ENCODE measurements at regions of chr7 and their contacts with region 1.

Region 1: GRCh38 chr7:131654668-131655326 is 98.4 kb upstream of the PODXL start:
- DNase-seq: no peak
- H3K4me3 ChIP-seq: no peak overlapping the region
- H3K27me3 ChIP-seq: no peaks in the 10 kb centered on the region
- CTCF ChIP-seq: peak; percentile 97

Region 2: GRCh38 chr7:131501422-131501821 is 153.4 kb before region 1 on chr7:
- CTCF ChIA-PET with region 1: interaction called, 92 read pairs
- POLR2A ChIA-PET with region 1: no interaction called
- DNase-seq: no peak
- H3K4me3 ChIP-seq: no peak overlapping the region
- H3K27me3 ChIP-seq: no peaks in the 10 kb centered on the region
- CTCF ChIP-seq: no peak

Region 3: GRCh38 chr7:131507592-131508331 is 147.0 kb before region 1 on chr7:
- CTCF ChIA-PET with region 1: interaction called, 92 read pairs
- POLR2A ChIA-PET with region 1: no interaction called
- DNase-seq: no peak
- H3K4me3 ChIP-seq: no peak overlapping the region
- H3K27me3 ChIP-seq: no peaks in the 10 kb centered on the region
- CTCF ChIP-seq: peak; percentile 97

Region 4: DNA sequence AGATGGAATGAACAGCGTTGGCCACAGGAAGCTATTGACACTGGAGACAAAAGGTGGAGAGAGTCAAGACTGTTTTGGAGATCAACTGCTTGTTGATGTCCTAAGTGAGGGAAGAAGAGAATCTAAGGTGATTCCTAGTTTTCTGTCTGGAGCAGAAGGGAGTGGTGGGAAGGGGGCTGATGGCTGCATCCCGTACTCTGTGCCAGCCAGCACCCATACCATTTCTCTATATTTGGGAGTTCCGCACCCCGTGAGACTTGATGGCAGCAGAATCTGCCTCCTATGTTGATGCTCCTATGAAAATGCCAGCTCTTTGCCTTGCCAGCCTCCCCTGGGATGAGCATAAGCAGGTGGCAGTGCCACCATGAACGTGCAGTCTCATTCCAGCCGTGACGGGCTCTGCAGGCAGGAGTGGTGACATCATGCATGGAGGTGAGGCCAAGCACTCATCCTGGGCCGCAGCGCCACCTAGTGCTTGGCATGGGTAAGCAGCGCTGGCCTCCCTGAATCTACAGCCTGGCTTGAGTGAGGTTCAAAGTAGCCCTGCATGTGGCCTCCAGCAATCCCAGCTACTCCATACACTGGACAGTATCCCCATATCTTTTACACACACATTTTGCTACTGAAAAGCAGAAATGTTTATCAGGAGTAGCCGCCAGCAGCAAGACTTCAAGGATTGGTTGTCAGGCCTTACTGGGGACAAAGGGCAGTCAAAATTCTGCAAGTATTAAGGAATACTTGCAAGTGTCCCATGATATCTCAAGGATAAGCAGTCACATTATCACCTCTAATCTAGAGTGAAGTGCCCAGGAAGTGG is 141.3 kb before region 1 on chr7:
- CTCF ChIA-PET with region 1: interaction called, 92 read pairs
- POLR2A ChIA-PET with region 1: no interaction called
- DNase-seq: no peak
- H3K4me3 ChIP-seq: no peak overlapping the region
- H3K27me3 ChIP-seq: no peaks in the 10 kb centered on the region
- CTCF ChIP-seq: peak; percentile 99

Region 5: GRCh38 chr7:131642429-131642828 is 12.4 kb before region 1 on chr7:
- CTCF ChIA-PET with region 1: interaction called, 12 read pairs
- POLR2A ChIA-PET with region 1: no interaction called
- DNase-seq: no peak
- H3K4me3 ChIP-seq: no peak overlapping the region
- H3K27me3 ChIP-seq: no peaks in the 10 kb centered on the region
- CTCF ChIP-seq: no peak

Region 6: DNA sequence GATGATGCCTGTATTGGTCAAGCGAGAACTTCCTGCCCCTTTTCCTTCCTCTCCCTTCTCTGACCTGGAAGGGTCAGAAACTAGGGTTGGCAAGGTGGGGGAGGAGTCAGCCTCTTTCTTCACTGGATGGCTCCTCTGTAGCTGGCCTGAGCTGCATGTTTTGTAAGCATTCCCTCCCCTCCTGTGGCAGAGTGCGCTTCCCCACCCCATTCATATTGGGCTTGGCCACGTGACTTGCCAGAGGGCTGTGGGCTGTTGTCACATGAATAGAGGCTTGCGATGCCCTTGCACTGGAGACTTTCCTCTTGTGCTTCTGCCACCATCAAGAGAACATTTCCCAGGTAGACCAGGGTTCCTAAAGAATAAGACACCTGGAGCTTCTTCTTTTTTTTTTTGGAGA is 12.9 kb after region 1 on chr7:
- CTCF ChIA-PET with region 1: interaction called, 15 read pairs
- POLR2A ChIA-PET with region 1: no interaction called
- DNase-seq: no peak
- H3K4me3 ChIP-seq: no peak overlapping the region
- H3K27me3 ChIP-seq: peaks cover under 1% of the 10 kb centered on the region; the same call in 1 of the 2 replicates
- CTCF ChIP-seq: no peak

Region 7: GRCh38 chr7:131723926-131724325 is 69.1 kb after region 1 on chr7:
- CTCF ChIA-PET with region 1: no interaction called
- POLR2A ChIA-PET with region 1: no interaction called
- DNase-seq: no peak
- H3K4me3 ChIP-seq: no peak overlapping the region
- H3K27me3 ChIP-seq: no peaks in the 10 kb centered on the region
- CTCF ChIP-seq: no peak